ENCODE measurements at regions of chr3 and their contacts with region 1.

Region 1: DNA sequence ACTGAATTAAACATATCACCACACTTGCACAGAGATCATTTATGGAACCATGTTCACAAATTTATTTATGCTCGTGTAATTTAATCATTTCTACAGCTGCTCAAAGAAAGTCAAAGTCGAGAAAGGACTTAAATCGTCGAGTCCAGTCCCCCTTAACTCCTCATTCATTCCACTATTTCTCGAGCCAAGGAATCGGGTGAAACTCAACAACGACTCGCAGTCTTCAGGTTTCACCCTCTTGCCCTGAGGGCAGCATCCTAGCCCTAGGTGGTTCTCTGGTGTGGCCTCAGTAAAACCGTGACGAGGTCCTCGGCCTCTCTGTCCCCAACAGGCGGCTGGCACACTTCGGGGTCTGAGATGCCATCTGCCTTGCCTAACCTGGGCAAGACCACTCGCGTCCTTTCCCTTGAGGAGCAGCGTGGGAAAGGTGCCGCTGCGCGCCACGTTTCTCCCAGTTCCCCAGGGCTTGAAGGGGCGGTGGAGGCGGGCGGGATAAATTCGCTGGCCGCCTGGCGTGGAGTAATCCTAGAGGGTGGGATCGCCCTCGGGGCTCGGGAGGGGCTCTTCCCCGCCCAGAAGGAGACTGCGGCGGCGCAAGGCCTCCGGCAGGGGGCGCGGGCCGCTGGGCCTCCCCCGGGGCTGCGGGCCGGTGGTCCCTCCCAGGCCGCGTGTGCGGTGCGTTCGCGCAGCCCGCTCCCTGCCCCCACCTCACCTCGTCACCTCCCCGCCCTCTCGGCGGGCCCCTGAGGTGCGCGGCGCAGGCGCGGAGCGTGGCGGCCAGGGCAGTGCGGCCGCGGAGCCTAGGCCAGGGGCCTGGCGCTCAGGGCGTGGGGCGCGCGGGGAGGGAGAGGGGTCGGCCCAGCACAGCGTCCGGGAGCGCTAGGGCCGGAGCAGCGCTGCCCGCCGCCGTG is at the start of gene ZNF639:
- DNase-seq: peak; percentile 89
- ATAC-seq: peak; percentile 88
- H3K4me3 Mint-ChIP-seq: peak within 1 kb of the TSS; percentile 87
- H3K27ac Mint-ChIP-seq: peak within 1 kb of the TSS; percentile 89
- H3K4me1 Mint-ChIP-seq: peaks cover 36% of the 10 kb centered on the region
- H3K27me3 Mint-ChIP-seq: no peaks in the 10 kb centered on the region
- CTCF ChIP-seq: peak; percentile 57
- total RNA-seq, gene ZNF639: 37.1 and 41.4 TPM in 2 replicates

Region 2: DNA sequence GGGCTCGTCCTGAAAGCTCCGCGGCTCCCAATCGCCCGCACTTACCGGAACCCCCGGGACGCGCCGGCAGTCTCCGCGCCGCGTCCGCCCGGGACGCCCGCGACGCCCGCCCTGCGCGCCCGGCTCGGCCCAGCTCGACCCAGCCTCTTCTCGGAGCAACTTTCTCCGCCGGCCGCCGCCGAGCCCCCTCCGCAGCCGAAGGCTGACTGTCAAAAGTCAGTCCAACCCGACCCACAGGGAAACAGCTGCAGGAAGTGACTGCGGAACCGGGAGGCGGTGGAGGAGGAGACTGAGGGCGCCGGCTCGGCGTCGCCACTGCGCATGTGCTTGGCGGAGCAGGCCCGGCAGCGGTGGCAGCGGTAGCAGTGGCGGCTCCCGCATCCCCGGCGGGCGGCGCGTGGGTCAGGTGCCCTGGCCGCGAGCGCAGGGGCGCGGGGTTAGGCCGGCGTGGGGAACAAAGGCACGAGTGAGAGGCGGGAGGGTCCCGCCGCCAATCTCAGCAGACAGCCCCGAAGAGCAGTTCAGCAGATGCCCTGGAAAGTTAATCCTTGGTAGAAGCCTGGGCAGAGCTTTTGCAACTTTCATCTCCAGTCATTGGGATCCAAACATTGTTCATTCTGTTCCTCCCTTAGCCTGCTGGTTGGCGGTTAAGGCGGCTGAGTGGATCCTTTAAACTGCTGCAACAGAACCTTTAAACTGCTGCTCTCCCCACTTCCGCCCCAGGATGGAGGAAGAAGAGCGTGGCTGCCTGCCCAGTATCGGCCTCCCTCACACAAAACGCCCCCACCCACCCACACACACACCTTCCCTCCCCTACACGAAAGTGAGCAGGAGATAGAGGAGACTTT is 250.8 kb before region 1 on chr3 and contains the start of gene ZMAT3:
- CTCF ChIA-PET with region 1: interaction called, 10 read pairs
- POLR2A ChIA-PET with region 1: no interaction called
- intact Hi-C with region 1: loop called (anchors 1 kb)
- DNase-seq: peak; percentile 82
- ATAC-seq: peak; percentile 74
- H3K4me3 Mint-ChIP-seq: peak within 1 kb of the TSS; percentile 96
- H3K27ac Mint-ChIP-seq: peak within 1 kb of the TSS; percentile 91
- H3K4me1 Mint-ChIP-seq: peaks cover 60% of the 10 kb centered on the region
- H3K27me3 Mint-ChIP-seq: no peaks in the 10 kb centered on the region
- CTCF ChIP-seq: no peak
- total RNA-seq, gene ZMAT3: 29.8 and 32.0 TPM in 2 replicates

Region 3: DNA sequence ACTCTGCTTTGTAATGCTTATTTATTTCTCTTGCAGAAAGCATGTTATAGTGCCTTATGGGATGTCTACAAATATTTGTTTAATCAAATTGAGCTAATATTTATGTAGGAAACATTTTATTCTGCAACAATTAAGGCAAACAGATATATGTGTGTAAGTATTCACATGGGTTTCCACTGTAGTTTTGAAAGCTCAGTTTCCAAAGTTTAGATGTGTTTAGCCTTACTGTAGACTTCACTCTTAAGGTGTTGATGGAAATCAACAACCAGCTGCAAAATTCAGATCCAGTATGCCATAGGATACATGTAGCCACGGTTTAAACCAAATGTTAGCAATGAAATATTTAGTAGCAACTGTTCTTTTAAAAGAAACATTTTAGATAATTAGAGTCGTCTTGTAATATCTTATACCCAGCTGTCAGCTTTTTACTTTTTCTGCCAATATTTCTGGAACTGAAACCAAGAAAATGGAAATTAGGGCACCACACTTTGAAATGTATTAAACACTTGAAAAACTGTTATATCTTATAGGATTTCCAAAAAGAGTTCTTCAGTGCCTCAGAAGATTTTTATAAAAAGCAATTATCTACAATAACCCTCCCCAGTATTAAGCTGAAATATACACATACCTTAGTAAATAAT is 155.9 kb before region 1 on chr3:
- CTCF ChIA-PET with region 1: no interaction called
- POLR2A ChIA-PET with region 1: no interaction called
- intact Hi-C with region 1: no loop called
- DNase-seq: no peak
- ATAC-seq: no peak
- H3K4me3 Mint-ChIP-seq: peak overlapping the region; percentile 35
- H3K27ac Mint-ChIP-seq: no peak overlapping the region
- H3K4me1 Mint-ChIP-seq: peaks cover 74% of the 10 kb centered on the region
- H3K27me3 Mint-ChIP-seq: no peaks in the 10 kb centered on the region
- CTCF ChIP-seq: no peak

Region 4: GRCh38 chr3:179236669-179237301 is 85.8 kb before region 1 on chr3:
- CTCF ChIA-PET with region 1: no interaction called
- POLR2A ChIA-PET with region 1: no interaction called
- intact Hi-C with region 1: loop called (anchors 5 kb)
- DNase-seq: no peak
- ATAC-seq: no peak
- H3K4me3 Mint-ChIP-seq: no peak overlapping the region
- H3K27ac Mint-ChIP-seq: no peak overlapping the region
- H3K4me1 Mint-ChIP-seq: peaks cover 8% of the 10 kb centered on the region
- H3K27me3 Mint-ChIP-seq: no peaks in the 10 kb centered on the region
- CTCF ChIP-seq: no peak

Region 5: DNA sequence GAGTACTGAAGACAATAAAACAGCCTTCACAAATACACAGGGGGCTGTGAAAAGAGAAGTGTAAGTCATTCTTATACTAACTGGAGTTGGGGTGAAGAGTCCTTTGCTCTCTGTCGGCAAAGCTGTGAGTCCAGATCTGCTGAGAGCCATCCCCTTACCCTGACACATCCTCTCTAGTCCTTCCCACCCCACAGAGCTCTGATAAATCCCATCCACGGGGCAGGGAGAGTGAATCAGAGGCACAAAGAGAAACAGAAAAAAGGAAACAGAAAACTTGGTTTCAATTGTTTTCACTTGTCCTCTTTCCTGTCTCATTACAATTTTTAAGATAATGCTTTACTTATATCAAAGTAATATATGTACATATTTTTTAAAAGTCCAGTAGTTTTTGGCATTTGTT is 17.9 kb before region 1 on chr3:
- CTCF ChIA-PET with region 1: no interaction called
- POLR2A ChIA-PET with region 1: no interaction called
- intact Hi-C with region 1: no loop called
- DNase-seq: no peak
- ATAC-seq: no peak
- H3K4me3 Mint-ChIP-seq: no peak overlapping the region
- H3K27ac Mint-ChIP-seq: no peak overlapping the region
- H3K4me1 Mint-ChIP-seq: peaks cover 6% of the 10 kb centered on the region
- H3K27me3 Mint-ChIP-seq: no peaks in the 10 kb centered on the region
- CTCF ChIP-seq: no peak

Region 6: DNA sequence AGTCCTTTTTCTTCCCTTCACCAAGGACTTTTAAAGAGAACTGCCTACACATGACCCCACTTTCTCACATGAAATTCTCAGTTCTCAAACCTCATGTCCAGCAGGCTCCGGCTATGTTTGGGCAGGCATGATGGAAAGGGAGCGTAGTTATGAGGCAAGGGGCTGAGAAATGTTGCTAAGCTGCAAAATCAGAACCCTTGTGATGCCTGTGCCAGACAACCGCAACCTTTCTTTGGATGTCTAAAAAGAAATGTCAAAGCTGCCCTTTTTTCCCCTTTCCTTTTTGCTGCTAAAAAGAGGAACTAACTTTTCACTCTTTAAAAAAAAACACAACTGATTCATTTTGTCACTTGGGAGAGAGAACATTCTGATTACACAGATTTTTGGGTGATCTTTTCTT is 109.5 kb after region 1 on chr3:
- CTCF ChIA-PET with region 1: no interaction called
- POLR2A ChIA-PET with region 1: no interaction called
- intact Hi-C with region 1: loop called (anchors 5 kb)
- DNase-seq: peak; percentile 19
- ATAC-seq: peak; percentile 70
- H3K4me3 Mint-ChIP-seq: peak overlapping the region; percentile 44
- H3K27ac Mint-ChIP-seq: peak overlapping the region; percentile 75
- H3K4me1 Mint-ChIP-seq: peaks cover 59% of the 10 kb centered on the region
- H3K27me3 Mint-ChIP-seq: no peaks in the 10 kb centered on the region
- CTCF ChIP-seq: no peak

Region 7: GRCh38 chr3:179604321-179605078 is 282.0 kb after region 1 on chr3 and contains the starts of genes MRPL47 and NDUFB5:
- CTCF ChIA-PET with region 1: no interaction called
- POLR2A ChIA-PET with region 1: no interaction called
- intact Hi-C with region 1: loop called (anchors 1 kb)
- DNase-seq: peak; percentile 82
- ATAC-seq: peak; percentile 96
- H3K4me3 Mint-ChIP-seq: peak within 1 kb of the TSS; percentile 99
- H3K27ac Mint-ChIP-seq: peak within 1 kb of the TSS; percentile 99
- H3K4me1 Mint-ChIP-seq: peaks cover 51% of the 10 kb centered on the region
- H3K27me3 Mint-ChIP-seq: no peaks in the 10 kb centered on the region
- CTCF ChIP-seq: no peak
- total RNA-seq, gene MRPL47: 38.6 and 44.3 TPM in 2 replicates
- total RNA-seq, gene NDUFB5: 63.5 and 67.3 TPM in 2 replicates

Region 8: GRCh38 chr3:180912304-180913296 is 1590.1 kb after region 1 on chr3 and contains the start of gene FXR1:
- CTCF ChIA-PET with region 1: no interaction called
- POLR2A ChIA-PET with region 1: no interaction called
- intact Hi-C with region 1: loop called (anchors 5 kb)
- DNase-seq: peak; percentile 90
- ATAC-seq: peak; percentile 95
- H3K4me3 Mint-ChIP-seq: peak within 1 kb of the TSS; percentile 94
- H3K27ac Mint-ChIP-seq: peak within 1 kb of the TSS; percentile 95
- H3K4me1 Mint-ChIP-seq: peaks cover 52% of the 10 kb centered on the region
- H3K27me3 Mint-ChIP-seq: no peaks in the 10 kb centered on the region
- CTCF ChIP-seq: no peak
- total RNA-seq, gene FXR1: 130 TPM in 2 replicates

Measured in activated B cell treated with CpG ODN at 0.5 μM for 24 hours (primary cell).